ENCODE measurements at regions of chr3 and their contacts with region 1.

Region 1: GRCh38 chr3:13034109-13034800 is 39.0 kb downstream of the IQSEC1 start:
- DNase-seq: no peak
- H3K4me3 ChIP-seq: no peak overlapping the region
- CTCF ChIP-seq: no peak

Region 2: DNA sequence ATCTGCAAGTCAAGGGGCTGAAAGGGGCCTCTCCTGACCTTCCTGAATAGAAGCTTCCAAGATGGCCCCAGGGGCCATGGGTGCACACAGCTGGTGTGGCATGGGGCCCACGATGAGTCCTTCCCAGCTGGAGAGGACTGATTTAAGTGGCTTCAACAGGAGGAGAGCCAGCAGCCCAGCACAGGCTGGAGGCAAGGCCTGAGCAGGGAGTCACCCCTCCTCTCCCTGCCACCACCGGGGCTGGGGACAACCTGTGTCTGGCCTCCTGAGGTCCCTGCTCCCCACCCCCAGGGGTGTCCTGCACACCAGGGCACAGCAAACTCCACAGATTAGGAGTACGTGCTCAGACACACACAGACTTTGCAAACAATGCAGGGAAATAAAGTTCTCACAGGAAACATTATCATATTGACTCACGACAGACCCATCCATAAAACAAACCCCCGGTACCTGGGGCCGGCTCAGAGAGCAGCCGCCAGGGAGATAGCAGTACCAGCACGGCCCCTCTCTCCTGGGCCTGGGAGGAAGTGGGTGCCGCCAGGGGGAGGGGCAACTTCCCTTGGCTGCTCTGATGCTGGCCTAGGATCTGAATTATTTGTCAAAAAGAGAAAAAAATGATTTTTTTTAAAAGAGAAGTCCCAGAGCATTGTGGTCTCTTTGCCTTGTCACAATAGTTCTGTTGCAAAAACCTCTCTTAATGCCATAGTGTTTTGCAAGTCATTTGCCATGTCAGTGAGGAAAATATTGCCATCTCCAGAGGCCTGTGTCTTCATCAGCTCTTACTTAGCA is 571.9 kb before region 1 on chr3:
- in situ Hi-C with region 1: no loop called
- DNase-seq: no peak
- H3K4me3 ChIP-seq: no peak overlapping the region
- CTCF ChIP-seq: no peak

Region 3: DNA sequence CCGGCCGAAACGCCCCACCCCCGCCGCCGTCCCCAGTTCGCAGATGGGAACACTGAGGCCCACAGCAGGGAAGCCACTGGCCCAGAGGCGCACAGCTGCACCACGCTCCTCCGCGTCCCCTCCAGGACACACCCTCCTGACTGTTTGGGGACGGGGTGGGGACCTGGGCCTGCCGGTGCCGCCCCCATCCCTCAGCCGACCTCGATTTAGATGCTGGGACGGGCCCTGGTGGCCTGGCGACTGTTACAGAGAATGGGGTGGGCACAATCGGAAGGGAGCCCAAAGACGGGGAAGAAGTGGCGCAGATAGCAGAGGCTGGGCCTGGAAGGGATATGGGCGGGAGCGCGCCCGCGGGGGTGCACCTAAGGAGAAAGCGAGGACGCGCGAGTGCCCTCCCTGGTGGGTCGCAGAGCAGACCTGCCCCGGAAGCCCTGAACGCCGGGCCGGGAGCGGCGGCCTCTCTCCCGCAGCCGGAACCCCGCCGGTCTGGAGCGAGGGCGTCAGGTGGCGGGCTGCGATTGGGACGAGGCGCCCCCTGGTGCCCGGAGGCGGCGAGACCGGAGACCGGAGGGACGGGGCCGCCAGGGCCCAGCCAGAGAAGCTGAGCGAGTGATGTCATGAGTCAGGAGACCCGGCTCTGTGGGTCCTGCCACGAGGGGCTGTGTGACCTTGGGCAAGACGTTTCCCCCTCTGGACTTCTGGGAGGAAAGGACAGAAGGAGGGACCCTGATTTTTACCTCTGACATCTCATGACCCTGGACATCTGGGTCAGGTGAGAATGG is 39.5 kb before region 1 on chr3:
- in situ Hi-C with region 1: no loop called
- DNase-seq: peak; percentile 28
- H3K4me3 ChIP-seq: peak overlapping the region; percentile 56
- CTCF ChIP-seq: peak; percentile 84

Region 4: DNA sequence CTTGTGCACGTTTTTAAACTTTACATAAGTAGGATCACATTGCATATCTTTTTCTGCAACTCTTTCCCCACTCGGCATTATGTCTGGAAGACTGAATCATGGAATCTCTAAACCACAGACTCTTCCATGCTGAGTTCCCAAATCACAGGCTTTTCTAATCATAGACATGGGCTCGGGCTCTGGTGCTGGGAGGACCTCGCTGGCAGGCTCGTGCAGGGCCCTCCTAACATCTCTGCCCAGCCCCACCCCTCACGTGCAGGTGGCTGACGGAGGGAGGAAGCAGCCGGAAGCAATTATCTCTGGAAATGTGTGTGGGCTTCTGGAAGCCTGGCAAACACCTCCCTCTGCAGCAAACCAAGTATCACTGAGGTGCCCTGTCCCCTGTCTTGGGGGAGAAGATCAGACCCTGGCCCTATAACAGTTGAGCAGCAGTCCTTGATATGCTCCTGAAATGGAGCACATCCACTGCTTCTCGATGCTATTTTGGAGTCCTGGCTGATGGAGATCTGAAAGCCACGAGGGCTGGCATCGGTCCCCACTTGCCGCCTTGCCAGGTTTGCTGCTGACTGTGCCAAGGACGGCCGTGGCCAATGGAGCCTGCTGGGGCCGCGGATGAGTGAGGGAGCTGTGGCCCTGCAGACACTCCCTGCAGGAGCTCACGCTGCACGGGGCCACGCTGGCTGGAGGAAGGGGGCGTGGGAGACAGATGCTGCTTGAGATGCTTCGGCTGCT is 43.3 kb after region 1 on chr3:
- in situ Hi-C with region 1: loop called (anchors 5 kb)
- DNase-seq: peak; percentile 5
- H3K4me3 ChIP-seq: no peak overlapping the region
- CTCF ChIP-seq: no peak

Measured in astrocyte of the cerebellum (primary cell).